Caco-2 (cell line): ENCODE measurements at regions of chr11 and their contacts with region 1.

Region 1: GRCh38 chr11:15101072-15101709 is 13.5 kb upstream of the INSC start:
- DNase-seq: peak; percentile 62 to 71
- H3K4me3 ChIP-seq: no peak overlapping the region
- H3K4me3 Mint-ChIP-seq: no peak overlapping the region
- H3K27ac Mint-ChIP-seq: no peak overlapping the region
- H3K4me1 ChIP-seq: no peaks in the 10 kb centered on the region
- H3K4me1 Mint-ChIP-seq: no peaks in the 10 kb centered on the region
- H3K27me3 ChIP-seq: no peaks in the 10 kb centered on the region
- H3K27me3 Mint-ChIP-seq: peaks cover 8% of the 10 kb centered on the region
- CTCF ChIP-seq: peak; percentile 88 to 96

Region 2: DNA sequence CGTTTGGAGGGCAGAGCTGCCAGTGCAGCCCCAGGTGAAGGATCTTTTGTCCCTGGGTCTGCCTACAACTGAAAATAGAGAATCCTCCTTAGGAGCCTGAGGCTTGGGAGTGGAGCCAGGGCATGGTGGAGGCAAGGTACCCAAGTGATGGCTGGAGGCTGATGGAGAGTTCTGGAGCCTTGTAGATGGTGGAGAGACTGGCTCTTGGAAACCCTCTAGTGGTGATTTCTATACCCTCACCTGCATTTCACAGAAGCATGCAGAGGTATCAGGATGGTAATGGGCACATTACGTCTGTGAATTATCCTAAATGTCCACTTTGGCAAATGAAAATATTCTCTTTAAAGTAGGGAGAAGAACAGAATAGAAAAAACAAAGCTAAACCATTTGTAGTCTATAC is 57.9 kb after region 1 on chr11:
- CTCF ChIA-PET with region 1: interaction called, 3 read pairs
- POLR2A ChIA-PET with region 1: no interaction called
- intact Hi-C with region 1: loop called (anchors 1 kb)
- DNase-seq: peak in 1 of 2 experiments; percentile 21
- H3K4me3 ChIP-seq: no peak overlapping the region
- H3K4me3 Mint-ChIP-seq: no peak overlapping the region
- H3K27ac Mint-ChIP-seq: no peak overlapping the region
- H3K4me1 ChIP-seq: no peaks in the 10 kb centered on the region
- H3K4me1 Mint-ChIP-seq: peaks cover 7% of the 10 kb centered on the region
- H3K27me3 ChIP-seq: no peaks in the 10 kb centered on the region
- H3K27me3 Mint-ChIP-seq: peaks cover 8% of the 10 kb centered on the region
- CTCF ChIP-seq: peak; percentile 49 to 52

Region 3: DNA sequence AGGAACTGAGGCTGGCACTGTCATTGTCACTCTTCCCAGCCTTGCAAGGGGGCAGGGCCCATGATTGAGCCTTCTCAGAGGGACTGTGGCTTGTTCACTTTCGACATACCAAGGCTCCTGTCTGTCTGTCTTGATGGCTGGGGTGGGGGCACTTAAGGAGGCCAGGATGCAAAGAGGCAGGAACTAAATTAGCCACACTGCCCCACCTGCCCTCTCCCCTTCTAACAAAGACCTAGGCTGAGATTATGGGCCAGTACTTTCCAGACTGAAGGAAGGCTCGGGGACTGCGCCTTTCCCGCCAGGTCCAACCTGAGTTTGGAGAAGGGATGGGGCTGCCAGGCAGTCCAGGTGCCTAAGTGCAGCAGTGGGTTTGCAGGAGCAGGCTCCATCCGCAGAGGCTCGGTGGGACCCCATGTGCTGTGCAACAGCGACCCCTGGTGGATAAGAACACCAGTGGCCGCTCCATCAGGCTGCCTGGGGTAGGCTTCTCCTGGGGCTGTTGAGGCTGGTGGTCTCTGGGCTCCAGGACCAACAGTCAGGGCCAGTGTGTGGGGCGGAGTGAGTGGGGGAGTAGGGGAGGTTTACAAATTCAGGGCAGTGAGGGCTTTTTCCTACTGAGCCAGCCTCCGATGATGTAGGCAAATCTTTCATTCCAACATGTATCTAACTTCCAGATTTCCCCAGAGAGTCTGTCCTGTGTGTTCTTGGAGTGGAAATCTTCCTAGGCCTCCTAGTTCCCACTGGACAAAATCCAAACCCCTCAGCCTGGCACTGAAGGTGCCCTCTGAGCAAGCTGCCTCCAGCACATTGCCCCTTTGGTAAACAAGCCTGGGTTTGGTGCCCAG is 107.4 kb after region 1 on chr11:
- CTCF ChIA-PET with region 1: interaction called, 19 read pairs
- POLR2A ChIA-PET with region 1: no interaction called
- intact Hi-C with region 1: loop called (anchors 1 kb)
- DNase-seq: peak; percentile 71 to 87
- H3K4me3 ChIP-seq: no peak overlapping the region
- H3K4me3 Mint-ChIP-seq: no peak overlapping the region
- H3K27ac Mint-ChIP-seq: no peak overlapping the region
- H3K4me1 ChIP-seq: no peaks in the 10 kb centered on the region
- H3K4me1 Mint-ChIP-seq: peaks cover 3% of the 10 kb centered on the region
- H3K27me3 ChIP-seq: no peaks in the 10 kb centered on the region
- H3K27me3 Mint-ChIP-seq: peaks cover 7% of the 10 kb centered on the region
- CTCF ChIP-seq: peak; percentile 92 to 96

Region 4: GRCh38 chr11:15519124-15519791 is 418.1 kb after region 1 on chr11:
- CTCF ChIA-PET with region 1: no interaction called
- POLR2A ChIA-PET with region 1: no interaction called
- intact Hi-C with region 1: no loop called
- DNase-seq: no peak
- H3K4me3 ChIP-seq: no peak overlapping the region
- H3K4me3 Mint-ChIP-seq: no peak overlapping the region
- H3K27ac Mint-ChIP-seq: no peak overlapping the region
- H3K4me1 ChIP-seq: no peaks in the 10 kb centered on the region
- H3K4me1 Mint-ChIP-seq: no peaks in the 10 kb centered on the region
- H3K27me3 ChIP-seq: no peaks in the 10 kb centered on the region
- H3K27me3 Mint-ChIP-seq: peaks cover 14% of the 10 kb centered on the region
- CTCF ChIP-seq: no peak